ENCODE measurements at regions of chr6 and their contacts with region 1.

Region 1: DNA sequence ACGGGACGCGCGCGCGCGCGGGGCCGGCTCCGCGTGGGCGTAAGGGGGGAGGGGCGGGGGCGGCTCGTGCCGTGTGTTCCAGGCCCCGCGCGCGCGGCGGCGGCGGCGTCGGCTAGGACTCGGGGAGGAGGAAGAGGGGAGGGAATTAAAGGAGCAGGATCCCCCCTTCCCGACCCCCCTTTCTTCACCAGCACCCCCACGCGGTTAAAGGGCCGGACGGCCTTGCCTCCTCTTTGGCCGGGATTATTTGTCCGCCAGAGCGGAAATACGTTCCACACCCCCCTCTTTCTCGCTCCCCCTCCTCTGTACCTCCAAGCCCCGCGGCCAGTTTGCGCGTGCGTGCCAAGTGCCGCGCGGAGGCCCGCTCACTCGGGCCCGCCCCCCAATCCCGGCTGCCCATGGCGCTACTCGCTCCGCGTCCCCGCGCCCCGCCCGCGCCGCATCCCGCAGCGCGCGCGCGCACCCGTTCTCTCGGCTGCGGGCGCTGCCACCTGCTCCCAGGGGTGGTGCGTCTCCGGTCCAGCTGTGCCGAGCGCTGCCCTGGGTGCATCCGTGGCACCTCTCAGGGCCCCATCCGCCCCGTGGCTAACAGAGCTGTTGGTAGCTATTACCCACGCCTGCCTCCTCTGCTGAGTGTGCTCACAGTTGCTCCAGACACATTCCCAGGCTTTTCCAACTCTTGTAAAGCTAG is at the start of gene ZBTB12:
- DNase-seq: peak; percentile 96
- ATAC-seq: peak; percentile 61
- H3K4me3 ChIP-seq: peak within 1 kb of the TSS; percentile 78
- H3K27ac ChIP-seq: peak within 1 kb of the TSS; percentile 39
- H3K4me1 ChIP-seq: peaks cover 19% of the 10 kb centered on the region
- H3K27me3 ChIP-seq: no peaks in the 10 kb centered on the region
- CTCF ChIP-seq: no peak
- total RNA-seq, gene ZBTB12: 5.4 and 8.6 TPM in 2 replicates

Region 2: GRCh38 chr6:31862344-31863227 is 39.5 kb before region 1 on chr6 and contains the start of gene NEU1:
- CTCF ChIA-PET with region 1: interaction called, 6 read pairs
- POLR2A ChIA-PET with region 1: no interaction called
- intact Hi-C with region 1: loop called (anchors 5 kb)
- DNase-seq: peak; percentile 100
- ATAC-seq: peak; percentile 96
- H3K4me3 ChIP-seq: peak within 1 kb of the TSS; percentile 79
- H3K27ac ChIP-seq: peak within 1 kb of the TSS; percentile 77
- H3K4me1 ChIP-seq: peaks cover 5% of the 10 kb centered on the region; the same call in 1 of the 2 replicates
- H3K27me3 ChIP-seq: no peaks in the 10 kb centered on the region
- CTCF ChIP-seq: no peak
- total RNA-seq, gene NEU1: 31.7 and 33.1 TPM in 2 replicates

Region 3: GRCh38 chr6:31922942-31923341 is 20.8 kb after region 1 on chr6:
- CTCF ChIA-PET with region 1: no interaction called
- POLR2A ChIA-PET with region 1: no interaction called
- intact Hi-C with region 1: no loop called
- DNase-seq: peak; percentile 35
- ATAC-seq: 0 out of 2 replicates have a peak, but pooled peaks have one; percentile 38
- H3K4me3 ChIP-seq: no peak overlapping the region
- H3K27ac ChIP-seq: no peak overlapping the region
- H3K4me1 ChIP-seq: no peaks in the 10 kb centered on the region
- H3K27me3 ChIP-seq: no peaks in the 10 kb centered on the region
- CTCF ChIP-seq: peak; percentile 43; the same call in 1 of the 2 replicates

Region 4: GRCh38 chr6:31958741-31959739 is 56.9 kb after region 1 on chr6 and contains the starts of genes NELFE and SKIC2:
- CTCF ChIA-PET with region 1: no interaction called
- POLR2A ChIA-PET with region 1: no interaction called
- intact Hi-C with region 1: loop called (anchors 2 kb)
- DNase-seq: peak; percentile 99
- ATAC-seq: peak; percentile 100
- H3K4me3 ChIP-seq: peak within 1 kb of the TSS; percentile 96
- H3K27ac ChIP-seq: peak within 1 kb of the TSS; percentile 31
- H3K4me1 ChIP-seq: peaks cover 19% of the 10 kb centered on the region
- H3K27me3 ChIP-seq: no peaks in the 10 kb centered on the region
- CTCF ChIP-seq: no peak
- total RNA-seq, gene NELFE: 132 and 142 TPM in 2 replicates
- total RNA-seq, gene SKIC2: 81.9 and 95.0 TPM in 2 replicates

Region 5: GRCh38 chr6:32108094-32108627 is 206.1 kb after region 1 on chr6:
- CTCF ChIA-PET with region 1: no interaction called
- POLR2A ChIA-PET with region 1: interaction called, 19 read pairs
- intact Hi-C with region 1: loop called (anchors 10 kb)
- DNase-seq: peak; percentile 58
- ATAC-seq: peak; percentile 75
- H3K4me3 ChIP-seq: no peak overlapping the region; the same call in 1 of the 2 replicates
- H3K27ac ChIP-seq: no peak overlapping the region
- H3K4me1 ChIP-seq: peaks cover 25% of the 10 kb centered on the region
- H3K27me3 ChIP-seq: no peaks in the 10 kb centered on the region
- CTCF ChIP-seq: no peak

Region 6: DNA sequence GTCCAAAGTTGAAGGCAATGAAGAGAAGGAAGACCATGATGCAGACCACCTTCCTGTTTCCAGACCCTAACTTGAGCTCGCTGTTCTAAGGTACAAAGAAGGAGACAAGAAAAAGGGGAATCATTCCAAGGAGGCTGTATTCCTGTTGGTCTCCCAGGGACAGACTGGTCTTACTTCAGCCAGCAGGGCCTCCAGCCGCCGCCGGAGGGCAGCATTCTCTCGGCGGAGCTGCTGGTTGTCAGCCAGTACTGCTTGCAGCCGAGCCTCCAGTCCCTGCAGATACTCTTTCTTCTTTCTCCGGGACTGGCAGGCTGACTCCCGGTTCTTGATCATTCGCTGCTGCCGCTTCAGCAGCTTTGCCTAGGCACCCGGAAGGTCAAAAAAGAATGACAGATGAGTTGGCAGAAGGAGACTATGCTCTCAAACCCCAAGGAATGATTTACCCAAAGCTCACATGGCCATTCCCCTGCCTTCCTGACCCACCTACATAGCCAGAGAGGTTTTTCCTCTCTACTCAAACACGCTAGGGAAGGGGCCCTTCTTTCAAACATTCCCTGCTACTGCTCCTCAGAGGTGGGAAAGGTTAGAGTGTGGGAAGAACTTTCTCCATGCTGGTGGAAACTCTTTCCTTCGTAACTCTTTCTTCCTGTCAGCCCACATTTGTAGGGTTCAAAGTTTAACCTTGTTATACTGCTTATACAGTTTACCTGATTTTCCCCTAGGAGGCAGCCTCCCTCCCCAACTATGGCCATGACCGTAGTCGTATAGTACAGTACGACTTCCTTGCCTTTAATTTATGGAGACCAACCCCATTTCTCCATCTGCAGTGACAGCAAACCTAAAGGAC is 216.9 kb after region 1 on chr6:
- CTCF ChIA-PET with region 1: no interaction called
- POLR2A ChIA-PET with region 1: no interaction called
- intact Hi-C with region 1: loop called (anchors 10 kb)
- DNase-seq: peak; percentile 83
- ATAC-seq: peak; percentile 50
- H3K4me3 ChIP-seq: no peak overlapping the region
- H3K27ac ChIP-seq: no peak overlapping the region
- H3K4me1 ChIP-seq: peaks cover 21% of the 10 kb centered on the region
- H3K27me3 ChIP-seq: no peaks in the 10 kb centered on the region
- CTCF ChIP-seq: peak; percentile 92

Region 7: DNA sequence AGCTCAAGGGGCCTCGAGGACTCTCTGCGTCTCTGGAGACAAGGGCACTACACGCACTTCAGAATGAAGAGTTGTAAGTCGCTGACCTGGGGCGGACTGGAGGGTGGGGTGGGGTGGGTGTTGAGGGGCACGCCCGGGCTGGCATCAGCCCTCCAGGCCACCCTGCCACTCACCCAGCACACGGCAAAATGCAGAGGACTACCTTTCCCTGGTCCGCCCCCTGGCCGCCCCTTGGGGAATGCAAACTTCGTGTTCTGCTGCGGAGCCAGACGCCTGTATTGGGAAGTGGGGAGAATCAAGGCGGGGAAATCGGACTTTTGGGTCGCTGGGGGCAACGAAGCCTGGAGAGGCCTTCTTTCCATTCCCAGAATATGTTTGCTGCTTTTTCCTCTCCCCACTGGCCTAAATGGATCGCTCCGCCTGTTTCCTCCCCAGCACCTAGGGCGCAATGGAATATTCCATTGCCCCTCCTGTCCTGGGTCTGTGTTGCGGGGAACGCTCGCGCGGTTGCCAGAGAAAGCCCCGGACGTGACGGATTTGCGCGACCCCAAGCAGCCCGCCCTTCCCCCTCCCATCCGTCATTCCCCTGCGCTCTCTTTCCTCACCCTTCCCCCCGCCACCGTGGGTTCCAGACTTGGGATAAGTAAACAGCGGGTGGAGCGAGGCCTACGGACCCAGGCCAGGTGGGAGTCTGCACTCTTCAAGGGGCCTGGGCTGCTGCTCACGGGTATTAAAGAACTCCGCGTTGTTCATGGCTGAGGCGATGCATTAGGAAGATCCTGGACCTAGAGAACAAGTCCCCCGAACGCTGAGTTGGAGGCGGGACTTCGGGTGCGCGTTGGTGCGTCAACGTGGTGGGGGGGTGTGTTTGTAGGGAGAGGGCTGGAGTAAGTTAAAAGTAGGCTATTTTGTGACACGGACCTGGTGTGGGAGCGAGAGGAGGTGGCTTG is 251.7 kb after region 1 on chr6 and contains the start of gene PPT2:
- CTCF ChIA-PET with region 1: no interaction called
- POLR2A ChIA-PET with region 1: no interaction called
- intact Hi-C with region 1: no loop called
- DNase-seq: peak; percentile 89
- ATAC-seq: peak; percentile 79
- H3K4me3 ChIP-seq: peak within 1 kb of the TSS; percentile 96
- H3K27ac ChIP-seq: peak within 1 kb of the TSS; percentile 85
- H3K4me1 ChIP-seq: peaks cover 12% of the 10 kb centered on the region
- H3K27me3 ChIP-seq: no peaks in the 10 kb centered on the region
- CTCF ChIP-seq: no peak; the same call in 1 of the 2 replicates
- total RNA-seq, gene PPT2: 16.6 and 30.8 TPM in 2 replicates

Measured in PC-3 (cell line).